ENCODE measurements at regions of chr2 and their contacts with region 1.

Region 1: DNA sequence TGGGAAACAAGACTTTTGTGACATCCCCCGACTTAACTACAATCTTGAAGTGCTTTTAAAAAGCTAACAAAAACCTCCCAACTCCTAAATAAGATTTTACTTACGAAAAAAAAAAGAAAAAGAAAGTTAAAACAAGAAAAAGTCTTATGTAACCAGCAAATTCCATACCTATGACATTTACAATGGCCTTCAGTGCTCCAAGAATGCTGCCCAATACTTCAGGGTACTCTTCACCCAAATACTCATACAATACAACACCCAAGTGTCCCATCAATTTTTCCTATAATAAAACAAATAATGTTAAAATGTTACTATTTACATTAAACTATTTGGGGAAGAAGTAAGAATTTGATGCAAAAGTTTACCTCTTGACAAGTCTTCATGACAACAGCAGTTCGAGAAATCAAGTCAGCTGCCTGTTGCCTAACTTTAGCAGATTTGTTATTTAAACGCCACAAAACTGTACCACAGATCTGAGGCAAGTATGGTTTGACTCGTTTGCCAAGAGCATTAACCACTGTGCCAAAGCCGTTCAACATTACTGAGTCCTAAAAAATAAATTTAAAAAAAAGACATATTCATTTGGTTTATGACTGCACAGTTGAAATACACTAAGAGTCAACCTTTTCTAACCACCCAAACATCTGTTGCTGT is 34.8 kb downstream of the SF3B1 start:
- DNase-seq: no peak
- H3K4me3 ChIP-seq: no peak overlapping the region
- H3K27ac ChIP-seq: no peak overlapping the region
- H3K4me1 ChIP-seq: no peaks in the 10 kb centered on the region
- H3K27me3 ChIP-seq: no peaks in the 10 kb centered on the region
- CTCF ChIP-seq: no peak
- POLR2A ChIP-seq: no peak

Region 2: GRCh38 chr2:196783431-196784094 is 616.5 kb before region 1 on chr2:
- intact Hi-C with region 1: loop called (anchors 10 kb)
- DNase-seq: no peak
- H3K4me3 ChIP-seq: no peak overlapping the region
- H3K27ac ChIP-seq: no peak overlapping the region
- H3K4me1 ChIP-seq: no peaks in the 10 kb centered on the region
- H3K27me3 ChIP-seq: no peaks in the 10 kb centered on the region
- CTCF ChIP-seq: no peak
- POLR2A ChIP-seq: no peak